Adrenal gland (tissue), 19 donors: ENCODE measurements at regions of chr20 and their contacts with region 1.

Region 1: GRCh38 chr20:62357187-62357667 is 9.9 kb downstream of the LAMA5 start:
- DNase-seq: peak; percentile 70 to 90 (median 85)
- H3K4me3 ChIP-seq: peak overlapping the region in 1 of 4 donors; percentile 45
- H3K27ac ChIP-seq: peak overlapping the region in 4 of 5 donors; percentile 84 to 90 (median 88)
- H3K4me1 ChIP-seq: peaks cover 52 to 55% of the 10 kb centered on the region in 2 donors
- H3K27me3 ChIP-seq: no peaks in the 10 kb centered on the region
- CTCF ChIP-seq: no peak
- POLR2A ChIP-seq: no peak

Region 2: DNA sequence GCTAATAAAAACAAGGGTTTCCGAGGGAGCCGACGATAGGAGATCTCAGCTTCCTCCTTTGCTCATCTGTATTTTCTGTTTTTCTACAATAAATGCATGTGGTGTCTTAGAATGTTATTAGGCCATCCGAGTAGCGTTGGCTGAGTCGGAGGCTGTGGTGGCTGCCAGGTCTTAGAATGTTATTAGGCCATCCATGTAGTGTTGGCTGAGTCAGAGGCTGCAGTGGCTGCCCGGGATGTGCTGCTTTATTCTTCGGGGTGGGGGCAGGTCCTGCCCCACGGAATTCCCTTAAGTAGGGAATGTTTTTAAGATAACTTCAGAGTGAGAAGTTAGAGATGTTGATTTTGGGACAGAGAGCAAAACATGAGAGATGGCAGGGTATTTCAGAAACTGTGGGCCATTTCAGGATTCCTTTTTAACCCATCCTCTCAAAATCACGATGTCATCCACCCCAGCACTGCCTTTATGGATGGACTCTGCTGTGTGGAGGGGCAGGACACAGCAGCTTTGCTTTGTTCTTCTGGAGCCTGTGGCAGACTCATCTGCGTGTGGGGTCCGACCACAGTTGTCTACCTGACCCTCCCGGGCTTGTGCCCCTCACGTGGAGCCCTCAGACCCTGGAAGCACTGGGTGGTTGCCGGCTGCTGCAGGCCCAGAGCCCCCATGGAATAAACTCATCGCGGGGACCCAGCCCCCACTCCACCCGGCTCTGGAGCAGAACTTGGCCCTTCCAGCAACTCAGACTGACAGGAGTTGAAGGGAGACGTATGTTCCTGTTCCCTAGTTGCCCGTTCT is 98.5 kb before region 1 on chr20:
- intact Hi-C with region 1: no loop called
- DNase-seq: peak in 6 of 7 donors; percentile 69 to 82 (median 76)
- H3K4me3 ChIP-seq: no peak overlapping the region
- H3K27ac ChIP-seq: peak overlapping the region in 1 of 5 donors; percentile 45
- H3K4me1 ChIP-seq: peaks cover 7 to 9% of the 10 kb centered on the region in 2 donors
- H3K27me3 ChIP-seq: no peaks in the 10 kb centered on the region
- CTCF ChIP-seq: no peak
- POLR2A ChIP-seq: no peak

Region 3: GRCh38 chr20:62386383-62387218 is 29.4 kb after region 1 on chr20 and contains the start of gene RPS21:
- intact Hi-C with region 1: loop called in 1 of 2 experiments (anchors 5 kb)
- DNase-seq: peak; percentile 92 to 97 (median 95)
- H3K4me3 ChIP-seq: peak within 1 kb of the TSS; percentile 80 to 97 (median 88)
- H3K27ac ChIP-seq: peak within 1 kb of the TSS; percentile 54 to 91 (median 87)
- H3K4me1 ChIP-seq: peaks cover 17 to 30% of the 10 kb centered on the region in 2 donors
- H3K27me3 ChIP-seq: no peaks in the 10 kb centered on the region
- CTCF ChIP-seq: no peak
- POLR2A ChIP-seq: peak; percentile 43 to 80
- total RNA-seq, gene RPS21: 725 to 4,794 (median 1,551) TPM